ENCODE measurements at regions of chr2 and their contacts with region 1.

Region 1: DNA sequence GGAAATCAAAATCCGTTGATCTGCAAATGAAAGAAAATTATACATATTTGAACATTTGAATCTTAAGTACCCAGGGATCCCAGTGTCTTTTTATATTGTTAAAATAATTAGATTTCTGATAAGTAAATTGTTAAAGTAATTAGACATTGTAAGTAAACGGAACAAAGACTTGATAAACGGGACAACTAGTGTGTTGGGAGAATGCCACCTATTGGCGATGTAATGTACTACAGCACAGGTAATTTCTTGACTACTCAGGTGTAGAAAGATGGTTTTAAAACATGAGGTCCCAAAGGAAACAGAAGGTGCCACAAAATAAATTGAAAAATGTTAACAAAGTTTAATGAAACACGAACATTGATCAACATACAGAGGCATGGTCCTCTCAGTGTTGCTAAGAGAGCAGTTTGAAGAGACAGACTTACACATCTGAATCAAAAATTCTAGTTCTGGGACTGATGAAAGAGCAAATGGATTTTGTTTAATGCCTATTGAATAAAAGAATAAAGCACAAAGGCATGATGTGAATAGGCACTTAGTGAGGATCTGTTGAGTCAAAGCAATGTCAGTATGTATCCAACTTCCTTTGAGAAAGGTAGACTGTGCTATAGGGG is 103.4 kb upstream of the RASGRP3 start:
- DNase-seq: peak; percentile 32
- ATAC-seq: peak; percentile 26
- H3K4me3 Mint-ChIP-seq: no peak overlapping the region
- H3K27ac Mint-ChIP-seq: no peak overlapping the region
- H3K4me1 Mint-ChIP-seq: no peaks in the 10 kb centered on the region
- H3K27me3 Mint-ChIP-seq: no peaks in the 10 kb centered on the region

Region 2: GRCh38 chr2:32553829-32554432 is 819.1 kb before region 1 on chr2:
- CTCF ChIA-PET with region 1: no interaction called
- POLR2A ChIA-PET with region 1: no interaction called
- intact Hi-C with region 1: loop called (anchors 5 to 10 kb)
- DNase-seq: no peak
- ATAC-seq: peak; percentile 63
- H3K4me3 Mint-ChIP-seq: no peak overlapping the region
- H3K27ac Mint-ChIP-seq: no peak overlapping the region
- H3K4me1 Mint-ChIP-seq: no peaks in the 10 kb centered on the region
- H3K27me3 Mint-ChIP-seq: no peaks in the 10 kb centered on the region

Region 3: DNA sequence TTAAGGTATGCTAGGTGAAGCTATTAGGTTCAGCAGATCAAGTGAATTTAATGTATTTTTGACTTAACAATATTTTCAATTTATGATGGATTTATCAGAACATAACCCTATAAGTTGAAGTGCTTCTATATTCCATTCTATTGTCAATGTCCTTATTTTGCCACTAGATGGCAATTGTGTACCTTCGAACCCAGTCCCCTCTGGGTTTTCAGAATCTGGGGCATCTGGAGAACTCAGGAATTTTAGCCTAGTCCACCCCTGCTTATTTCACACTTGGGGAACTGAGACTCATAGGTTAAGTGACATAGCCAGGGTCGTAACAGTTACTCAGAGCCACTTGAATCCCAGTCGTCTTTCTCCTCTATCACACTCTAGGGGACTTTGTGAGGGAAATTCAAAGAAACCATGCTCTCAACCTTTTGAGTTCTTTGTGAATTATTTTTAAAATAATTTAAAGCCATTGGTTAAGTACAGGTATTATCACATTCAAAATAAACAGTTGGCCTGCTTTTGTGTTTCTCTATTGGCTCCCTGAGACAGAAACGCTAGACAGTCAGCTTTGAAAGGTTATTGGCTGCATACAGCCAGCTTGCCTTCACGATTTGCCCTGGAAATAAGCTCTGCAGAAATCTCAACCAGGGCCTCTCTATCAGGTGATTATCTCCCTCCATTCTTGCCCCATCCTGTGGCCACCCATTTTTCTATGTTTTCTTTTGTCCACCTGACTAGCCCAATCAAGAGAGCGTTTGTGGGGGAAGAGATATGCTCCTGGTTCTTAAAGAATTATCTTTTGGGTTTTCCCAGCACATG is 600.2 kb before region 1 on chr2:
- CTCF ChIA-PET with region 1: no interaction called
- POLR2A ChIA-PET with region 1: no interaction called
- intact Hi-C with region 1: loop called (anchors 5 to 10 kb)
- DNase-seq: no peak
- ATAC-seq: no peak
- H3K4me3 Mint-ChIP-seq: no peak overlapping the region
- H3K27ac Mint-ChIP-seq: no peak overlapping the region
- H3K4me1 Mint-ChIP-seq: peaks cover 3% of the 10 kb centered on the region
- H3K27me3 Mint-ChIP-seq: no peaks in the 10 kb centered on the region

Region 4: DNA sequence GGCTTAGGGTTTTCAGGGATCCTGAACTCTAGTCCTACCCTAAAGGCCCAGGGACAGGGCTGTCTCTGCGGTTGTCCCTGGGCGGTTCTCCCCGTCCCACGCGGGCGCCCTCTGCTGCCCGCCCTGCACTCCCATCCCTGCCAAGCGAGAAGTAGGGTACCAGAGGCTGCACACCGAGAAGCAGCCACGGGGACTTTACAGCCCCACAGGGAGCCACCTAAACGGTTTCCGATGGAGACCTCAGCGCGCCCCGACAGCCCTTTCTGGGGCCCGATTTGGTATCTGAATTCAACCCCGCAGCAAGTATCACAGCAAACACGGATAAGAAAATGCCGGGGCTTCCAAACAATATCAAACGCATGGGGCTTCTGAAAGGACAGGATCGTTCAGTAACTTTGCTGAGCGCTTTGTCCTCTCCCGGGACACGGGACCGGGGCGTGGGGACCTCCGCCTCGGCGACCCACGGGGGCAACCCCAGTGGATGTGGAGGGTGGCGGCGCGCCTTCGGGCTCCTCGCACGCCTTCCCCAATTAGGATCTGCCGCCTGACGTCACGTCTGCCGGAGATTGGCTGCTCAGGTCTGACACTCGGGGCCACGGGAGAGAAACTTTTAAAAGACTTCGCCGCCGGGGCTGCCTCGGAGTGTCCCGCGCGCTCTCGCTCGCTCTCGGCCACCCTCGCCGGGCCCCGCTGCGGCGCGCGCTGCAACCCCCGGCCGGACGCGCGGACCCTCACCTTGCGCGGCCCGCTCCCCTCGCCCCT is 426.6 kb before region 1 on chr2 and contains the start of gene LTBP1:
- CTCF ChIA-PET with region 1: no interaction called
- POLR2A ChIA-PET with region 1: no interaction called
- intact Hi-C with region 1: loop called in 1 of 2 experiments (anchors 5 kb)
- DNase-seq: peak; percentile 78
- ATAC-seq: peak; percentile 81
- H3K4me3 Mint-ChIP-seq: peak within 1 kb of the TSS; percentile 67
- H3K27ac Mint-ChIP-seq: no peak within 1 kb of the TSS
- H3K4me1 Mint-ChIP-seq: no peaks in the 10 kb centered on the region
- H3K27me3 Mint-ChIP-seq: peaks cover 23% of the 10 kb centered on the region
- total RNA-seq, gene LTBP1: 0.14 to 0.26 TPM

Region 5: GRCh38 chr2:33033606-33034081 is 339.4 kb before region 1 on chr2:
- CTCF ChIA-PET with region 1: interaction called, 4 read pairs
- POLR2A ChIA-PET with region 1: no interaction called
- intact Hi-C with region 1: loop called (anchors 1 to 5 kb)
- DNase-seq: no peak
- ATAC-seq: no peak
- H3K4me3 Mint-ChIP-seq: no peak overlapping the region
- H3K27ac Mint-ChIP-seq: no peak overlapping the region
- H3K4me1 Mint-ChIP-seq: no peaks in the 10 kb centered on the region
- H3K27me3 Mint-ChIP-seq: peaks cover 7% of the 10 kb centered on the region

Region 6: GRCh38 chr2:33209976-33210375 is 163.1 kb before region 1 on chr2:
- CTCF ChIA-PET with region 1: interaction called, 7 read pairs
- POLR2A ChIA-PET with region 1: no interaction called
- intact Hi-C with region 1: loop called in 1 of 2 experiments (anchors 2 kb)
- DNase-seq: no peak
- ATAC-seq: no peak
- H3K4me3 Mint-ChIP-seq: no peak overlapping the region
- H3K27ac Mint-ChIP-seq: no peak overlapping the region
- H3K4me1 Mint-ChIP-seq: no peaks in the 10 kb centered on the region
- H3K27me3 Mint-ChIP-seq: peaks cover 8% of the 10 kb centered on the region